ENCODE measurements at regions of chr12 and their contacts with region 1.

Region 1: GRCh38 chr12:132761032-132761920 is at the start of gene ANKLE2:
- DNase-seq: peak in 8 of 9 experiments; percentile 45 to 78 (median 66)
- ATAC-seq: peak; percentile 57
- H3K4me3 ChIP-seq: peak within 1 kb of the TSS; percentile 66 to 82
- H3K4me3 Mint-ChIP-seq: peak within 1 kb of the TSS; percentile 94
- H3K27ac ChIP-seq: peak within 1 kb of the TSS; percentile 71 to 75
- H3K27ac Mint-ChIP-seq: peak within 1 kb of the TSS; percentile 98
- H3K4me1 ChIP-seq: peaks cover 18% of the 10 kb centered on the region
- H3K4me1 Mint-ChIP-seq: peaks cover 35% of the 10 kb centered on the region
- H3K27me3 ChIP-seq: no peaks in the 10 kb centered on the region
- H3K27me3 Mint-ChIP-seq: no peaks in the 10 kb centered on the region
- CTCF ChIP-seq: no peak
- total RNA-seq, gene ANKLE2: 54.7 to 57.9 TPM

Region 2: DNA sequence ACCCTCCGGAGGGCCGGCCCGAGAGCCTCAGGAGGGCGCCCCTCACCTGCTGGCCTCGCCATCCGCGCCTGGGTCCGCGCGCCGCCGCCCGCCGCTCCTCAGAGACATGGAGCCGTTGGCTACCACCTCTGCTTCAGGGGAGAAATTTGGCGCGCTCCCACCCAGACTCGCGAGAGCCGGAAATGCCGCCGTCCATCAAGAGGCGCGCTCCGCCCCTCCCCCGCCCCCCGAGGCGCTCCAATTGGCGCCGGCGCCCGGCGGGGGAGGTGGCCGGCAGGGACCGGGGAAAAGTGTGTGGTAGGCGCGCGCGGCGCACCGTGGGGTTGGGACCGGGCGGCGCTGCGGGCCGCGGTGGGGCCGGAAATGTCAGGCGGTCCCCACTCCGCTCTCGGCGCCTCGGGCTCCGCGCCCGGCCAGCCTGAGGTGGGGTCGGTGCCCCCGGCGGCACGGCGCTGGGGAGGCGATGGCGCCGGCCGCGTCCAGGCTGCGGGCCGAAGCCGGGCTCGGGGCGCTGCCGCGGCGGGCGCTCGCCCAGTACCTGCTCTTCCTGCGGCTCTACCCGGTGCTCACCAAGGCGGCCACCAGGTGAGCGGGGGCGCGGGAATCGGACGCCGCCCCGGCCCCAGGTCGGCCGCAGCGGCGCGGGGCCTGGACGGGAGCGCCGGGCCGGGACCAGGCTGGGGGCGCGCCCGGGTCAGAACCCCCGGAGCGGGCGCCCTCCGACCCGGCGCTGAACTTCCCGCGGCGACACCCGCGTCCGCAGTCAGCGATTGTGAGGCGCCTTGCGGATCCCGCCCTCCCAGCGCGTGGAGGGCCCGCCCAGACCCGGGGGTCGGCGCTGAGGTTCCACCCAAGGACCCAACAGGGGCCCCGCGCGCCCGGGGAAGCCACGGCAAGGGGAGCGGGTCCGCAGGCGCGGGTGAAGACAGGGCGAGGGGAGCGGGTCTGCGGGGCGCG is 73.8 kb before region 1 on chr12 and contains the starts of genes POLE and PXMP2:
- CTCF ChIA-PET with region 1: no interaction called
- POLR2A ChIA-PET with region 1: no interaction called
- intact Hi-C with region 1: loop called (anchors 1 to 2 kb)
- DNase-seq: peak; percentile 88 to 98 (median 94)
- ATAC-seq: peak; percentile 95
- H3K4me3 ChIP-seq: peak within 1 kb of the TSS; percentile 38 to 58
- H3K4me3 Mint-ChIP-seq: peak within 1 kb of the TSS; percentile 82
- H3K27ac ChIP-seq: peak within 1 kb of the TSS in 1 of 2 experiments; percentile 27
- H3K27ac Mint-ChIP-seq: peak within 1 kb of the TSS; percentile 55
- H3K4me1 ChIP-seq: peaks cover 7% of the 10 kb centered on the region
- H3K4me1 Mint-ChIP-seq: peaks cover 14% of the 10 kb centered on the region
- H3K27me3 ChIP-seq: no peaks in the 10 kb centered on the region
- H3K27me3 Mint-ChIP-seq: no peaks in the 10 kb centered on the region
- CTCF ChIP-seq: no peak
- total RNA-seq, gene POLE: 25.9 to 31.1 TPM
- total RNA-seq, gene PXMP2: 1.2 to 1.8 TPM

Region 3: GRCh38 chr12:132736913-132737312 is 24.4 kb before region 1 on chr12:
- CTCF ChIA-PET with region 1: no interaction called
- POLR2A ChIA-PET with region 1: no interaction called
- intact Hi-C with region 1: no loop called
- DNase-seq: no peak
- ATAC-seq: no peak
- H3K4me3 ChIP-seq: no peak overlapping the region
- H3K4me3 Mint-ChIP-seq: no peak overlapping the region
- H3K27ac ChIP-seq: no peak overlapping the region
- H3K27ac Mint-ChIP-seq: peak overlapping the region; percentile 62
- H3K4me1 ChIP-seq: no peaks in the 10 kb centered on the region
- H3K4me1 Mint-ChIP-seq: peaks cover 2% of the 10 kb centered on the region
- H3K27me3 ChIP-seq: no peaks in the 10 kb centered on the region
- H3K27me3 Mint-ChIP-seq: no peaks in the 10 kb centered on the region
- CTCF ChIP-seq: no peak

Region 4: GRCh38 chr12:132771126-132771838 is 10.0 kb after region 1 on chr12:
- CTCF ChIA-PET with region 1: interaction called, 3 read pairs
- POLR2A ChIA-PET with region 1: interaction called, 4 read pairs
- intact Hi-C with region 1: loop called in 1 of 2 experiments (anchors 1 kb)
- DNase-seq: peak; percentile 13 to 79 (median 51)
- ATAC-seq: peak; percentile 84
- H3K4me3 ChIP-seq: peak overlapping the region in 1 of 2 experiments; percentile 37
- H3K4me3 Mint-ChIP-seq: peak overlapping the region; percentile 49
- H3K27ac ChIP-seq: peak overlapping the region; percentile 34 to 46
- H3K27ac Mint-ChIP-seq: peak overlapping the region; percentile 83
- H3K4me1 ChIP-seq: peaks cover 69% of the 10 kb centered on the region
- H3K4me1 Mint-ChIP-seq: peaks cover 62% of the 10 kb centered on the region
- H3K27me3 ChIP-seq: no peaks in the 10 kb centered on the region
- H3K27me3 Mint-ChIP-seq: no peaks in the 10 kb centered on the region
- CTCF ChIP-seq: no peak

Region 5: GRCh38 chr12:132887513-132888351 is 126.5 kb after region 1 on chr12 and contains the start of gene CHFR:
- CTCF ChIA-PET with region 1: no interaction called
- POLR2A ChIA-PET with region 1: no interaction called
- intact Hi-C with region 1: loop called (anchors 1 kb)
- DNase-seq: peak; percentile 86 to 98 (median 93)
- ATAC-seq: peak; percentile 98
- H3K4me3 ChIP-seq: peak within 1 kb of the TSS; percentile 79 to 86
- H3K4me3 Mint-ChIP-seq: peak within 1 kb of the TSS; percentile 97
- H3K27ac ChIP-seq: peak within 1 kb of the TSS; percentile 92 to 99
- H3K27ac Mint-ChIP-seq: peak within 1 kb of the TSS; percentile 100
- H3K4me1 ChIP-seq: peaks cover 23% of the 10 kb centered on the region
- H3K4me1 Mint-ChIP-seq: peaks cover 34% of the 10 kb centered on the region
- H3K27me3 ChIP-seq: no peaks in the 10 kb centered on the region
- H3K27me3 Mint-ChIP-seq: no peaks in the 10 kb centered on the region
- CTCF ChIP-seq: no peak
- total RNA-seq, gene CHFR: 70.6 to 81.1 TPM

Region 6: DNA sequence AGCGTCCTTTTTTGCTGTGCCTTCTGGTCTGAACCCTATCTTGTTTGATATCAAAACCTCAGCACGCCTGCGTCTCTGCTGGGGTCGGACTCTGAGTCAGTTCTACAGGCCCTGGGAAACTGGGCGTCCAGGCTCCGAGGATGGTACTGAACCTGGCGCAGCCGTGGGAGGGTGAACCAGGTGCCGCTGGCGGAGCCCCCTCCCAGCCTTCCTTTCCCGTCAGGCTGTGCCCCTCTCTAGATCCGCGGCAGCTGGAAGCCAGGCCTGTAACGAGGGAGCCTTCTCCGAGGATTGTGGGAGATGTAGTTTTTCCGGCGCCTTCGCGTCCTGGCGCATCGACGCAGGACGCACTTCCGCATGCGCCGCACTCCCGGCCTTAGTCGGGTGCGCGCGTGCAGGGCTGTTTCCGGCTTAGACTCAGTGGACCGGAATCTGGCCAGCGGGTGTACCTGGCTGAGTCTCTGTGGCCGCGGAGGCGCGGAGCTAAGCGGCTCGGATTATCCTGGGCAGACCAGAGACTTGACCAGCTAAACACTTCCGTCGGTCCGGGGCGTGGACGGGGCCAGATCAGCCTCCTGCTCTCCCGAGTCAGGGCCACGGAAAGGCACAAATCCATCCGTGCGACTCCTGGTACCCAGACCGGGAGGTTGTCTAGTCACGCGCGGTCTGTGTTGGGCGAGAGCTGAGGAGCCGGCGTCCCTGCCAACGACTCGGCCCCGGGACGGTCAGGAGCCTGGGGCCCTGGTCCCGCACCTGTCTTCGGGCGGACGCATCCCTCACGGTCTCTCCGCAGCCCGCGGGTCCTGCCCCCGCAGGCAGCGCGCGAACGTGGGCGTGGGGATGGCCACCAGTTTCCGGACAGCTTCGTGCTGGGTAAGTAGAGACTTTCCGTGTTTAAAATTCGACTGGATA is 225.0 kb after region 1 on chr12 and contains the start of gene ZNF26:
- CTCF ChIA-PET with region 1: no interaction called
- POLR2A ChIA-PET with region 1: no interaction called
- intact Hi-C with region 1: loop called in 1 of 2 experiments (anchors 10 kb)
- DNase-seq: peak; percentile 70 to 96 (median 88)
- ATAC-seq: peak; percentile 96
- H3K4me3 ChIP-seq: peak within 1 kb of the TSS; percentile 90 to 98
- H3K4me3 Mint-ChIP-seq: peak within 1 kb of the TSS; percentile 93
- H3K27ac ChIP-seq: peak within 1 kb of the TSS; percentile 89 to 93
- H3K27ac Mint-ChIP-seq: peak within 1 kb of the TSS; percentile 94
- H3K4me1 ChIP-seq: peaks cover 18% of the 10 kb centered on the region
- H3K4me1 Mint-ChIP-seq: peaks cover 35% of the 10 kb centered on the region
- H3K27me3 ChIP-seq: no peaks in the 10 kb centered on the region
- H3K27me3 Mint-ChIP-seq: peaks cover 2% of the 10 kb centered on the region
- CTCF ChIP-seq: no peak
- total RNA-seq, gene ZNF26: 44.8 to 45.5 TPM

Region 7: DNA sequence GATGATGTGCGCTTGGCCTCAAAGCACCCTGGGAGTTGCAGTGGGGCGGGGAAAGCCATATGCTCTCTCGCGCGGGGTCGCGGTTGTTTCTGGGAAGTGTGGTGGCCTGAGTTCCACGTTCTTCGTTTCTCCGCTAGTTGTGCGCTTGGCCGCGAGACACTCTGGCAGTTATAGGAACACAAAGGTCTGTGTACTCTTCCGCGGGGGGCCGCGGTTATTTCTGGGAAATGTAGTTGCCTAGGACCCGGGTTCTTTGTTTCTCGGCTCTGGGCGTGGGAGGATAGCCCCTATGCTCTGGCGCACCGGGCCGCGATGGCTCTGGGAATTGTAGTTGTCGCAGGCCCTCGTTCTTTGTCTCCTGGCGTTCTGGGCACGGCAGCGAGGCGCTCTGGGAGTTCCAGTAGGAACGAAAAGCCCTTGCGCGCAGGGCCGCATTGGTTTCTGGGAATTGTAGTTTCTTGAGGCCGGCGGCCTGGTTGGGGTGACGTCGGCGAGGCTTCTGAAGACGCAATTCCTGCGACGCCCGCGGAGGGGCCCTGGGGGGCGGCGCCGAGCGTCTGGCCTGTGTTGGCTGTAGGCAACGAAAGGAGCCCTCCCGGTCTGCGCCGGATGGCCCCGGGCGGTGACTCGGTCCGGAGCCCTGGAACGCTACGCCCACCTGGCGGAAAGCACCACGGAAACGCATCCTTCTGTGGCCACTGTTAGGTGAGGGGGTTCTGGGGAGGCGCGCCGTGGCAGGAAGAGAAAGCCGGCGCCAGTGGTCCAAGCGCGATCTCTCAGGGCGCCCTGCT is 319.3 kb after region 1 on chr12 and contains the start of gene ZNF140:
- CTCF ChIA-PET with region 1: no interaction called
- POLR2A ChIA-PET with region 1: no interaction called
- intact Hi-C with region 1: loop called in 1 of 2 experiments (anchors 2 kb)
- DNase-seq: peak; percentile 87 to 98 (median 94)
- ATAC-seq: peak; percentile 57
- H3K4me3 ChIP-seq: peak within 1 kb of the TSS; percentile 87 to 92
- H3K4me3 Mint-ChIP-seq: no peak within 1 kb of the TSS
- H3K27ac ChIP-seq: peak within 1 kb of the TSS; percentile 98 to 99
- H3K27ac Mint-ChIP-seq: no peak within 1 kb of the TSS
- H3K4me1 ChIP-seq: peaks cover 15% of the 10 kb centered on the region
- H3K4me1 Mint-ChIP-seq: peaks cover 17% of the 10 kb centered on the region
- H3K27me3 ChIP-seq: no peaks in the 10 kb centered on the region
- H3K27me3 Mint-ChIP-seq: no peaks in the 10 kb centered on the region
- CTCF ChIP-seq: peak; percentile 33
- total RNA-seq, gene ZNF140: 9.1 to 9.4 TPM

Measured in CD8-positive, alpha-beta T cell (primary cell).